Activated T-helper 2 cell treated with anti-CD3 and anti-CD28 coated beads, Interferon-gamma antibody, Interleukin-2, Interleukin-4, amounts not matched to agents 10 μg/mL and 5 μg/mL and 100 μg/mL, durations not matched to agents 14 hours and 24 hours and 36 hours (primary cell): ENCODE measurements at regions of chr16 and their contacts with region 1.

Region 1: DNA sequence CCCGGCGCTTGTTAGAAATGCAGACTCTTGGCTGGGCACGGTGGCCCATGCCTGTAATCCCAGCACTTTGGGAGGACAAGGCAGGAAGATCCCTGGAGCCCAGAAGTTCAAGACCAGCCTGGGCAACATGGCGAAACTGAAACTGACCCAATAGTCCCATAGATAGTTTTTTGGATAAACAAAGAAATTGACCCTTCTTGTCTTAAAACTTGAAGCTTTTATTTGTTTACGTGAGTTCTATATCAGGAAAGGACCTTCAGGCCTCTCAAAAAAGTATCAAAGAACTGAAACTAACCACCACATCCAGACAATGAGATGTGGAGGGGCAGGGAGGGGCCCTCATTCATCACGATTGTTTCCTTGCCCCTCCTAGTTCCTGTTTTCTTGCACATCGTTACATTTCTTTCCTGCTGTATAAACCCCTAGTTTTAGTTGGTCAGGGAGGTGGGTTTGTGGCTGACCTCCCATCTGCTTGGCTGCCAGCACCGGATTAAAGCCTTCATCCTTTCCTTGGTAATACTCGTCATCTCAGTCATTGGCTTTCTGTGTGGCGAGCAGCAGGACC is 29.9 kb upstream of the PRM1 start:
- DNase-seq: peak; percentile 65
- H3K4me3 Mint-ChIP-seq: peak overlapping the region; percentile 30
- H3K27ac Mint-ChIP-seq: peak overlapping the region; percentile 80
- H3K4me1 Mint-ChIP-seq: peaks cover 38% of the 10 kb centered on the region
- H3K27me3 Mint-ChIP-seq: no peaks in the 10 kb centered on the region

Region 2: DNA sequence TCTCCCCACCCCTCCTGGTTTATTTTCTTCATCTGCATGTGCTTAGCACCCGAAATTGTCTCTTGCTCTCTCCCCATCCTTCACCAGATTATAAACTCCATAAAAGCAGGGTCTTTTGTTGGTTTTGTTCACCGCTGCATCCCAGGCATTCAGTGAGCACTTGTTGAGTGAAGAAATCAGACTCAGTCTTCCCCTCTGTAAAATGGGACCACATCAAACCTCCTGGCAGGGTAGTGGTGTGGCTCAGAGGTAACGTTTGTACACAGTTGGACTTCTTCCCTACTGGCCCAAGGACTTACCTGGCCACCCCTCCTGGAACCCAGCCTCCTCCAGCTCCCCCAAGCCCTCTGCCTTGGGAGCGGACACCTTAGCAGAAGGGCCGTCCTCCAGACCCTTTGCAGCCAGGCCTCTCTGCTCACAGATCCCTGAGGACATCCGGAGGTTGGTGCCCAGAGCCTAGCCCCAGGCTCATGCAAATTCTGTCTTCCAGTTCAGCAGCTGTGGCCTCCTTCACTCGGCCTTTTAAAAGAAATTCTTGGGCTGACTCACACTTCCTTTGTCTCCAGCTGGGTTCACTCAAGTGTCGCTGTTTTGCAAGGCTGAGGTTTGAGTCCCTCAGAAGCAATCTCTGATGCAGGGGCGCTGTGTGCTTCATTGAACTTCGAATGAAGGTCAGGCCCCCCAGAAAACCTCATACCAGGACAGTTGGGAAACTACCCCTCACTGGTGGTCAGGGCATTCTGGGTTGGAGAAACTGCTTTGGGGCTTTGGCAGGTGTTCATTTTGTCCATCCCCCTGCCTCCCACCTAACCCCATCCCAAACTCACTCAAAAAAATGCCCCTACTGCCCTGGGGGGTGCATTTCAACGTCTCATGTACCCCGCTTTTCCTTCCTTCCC is 17.3 kb after region 1 on chr16:
- intact Hi-C with region 1: loop called (anchors 1 kb)
- DNase-seq: peak; percentile 45
- H3K4me3 Mint-ChIP-seq: peak overlapping the region; percentile 35
- H3K27ac Mint-ChIP-seq: peak overlapping the region; percentile 58
- H3K4me1 Mint-ChIP-seq: peaks cover 47% of the 10 kb centered on the region
- H3K27me3 Mint-ChIP-seq: no peaks in the 10 kb centered on the region

Region 3: GRCh38 chr16:11345040-11345862 is 34.2 kb after region 1 on chr16 and contains the start of gene RMI2:
- intact Hi-C with region 1: loop called (anchors 1 kb)
- DNase-seq: peak; percentile 98
- H3K4me3 Mint-ChIP-seq: peak within 1 kb of the TSS; percentile 96
- H3K27ac Mint-ChIP-seq: peak within 1 kb of the TSS; percentile 83
- H3K4me1 Mint-ChIP-seq: peaks cover 46% of the 10 kb centered on the region
- H3K27me3 Mint-ChIP-seq: no peaks in the 10 kb centered on the region
- total RNA-seq, gene RMI2: 65.2 and 67.4 TPM in 2 replicates

Region 4: GRCh38 chr16:11356573-11357331 is 45.7 kb after region 1 on chr16:
- intact Hi-C with region 1: loop called (anchors 1 kb)
- DNase-seq: peak; percentile 33
- H3K4me3 Mint-ChIP-seq: no peak overlapping the region
- H3K27ac Mint-ChIP-seq: no peak overlapping the region
- H3K4me1 Mint-ChIP-seq: peaks cover 68% of the 10 kb centered on the region
- H3K27me3 Mint-ChIP-seq: no peaks in the 10 kb centered on the region

Region 5: GRCh38 chr16:11361701-11362451 is 50.8 kb after region 1 on chr16:
- intact Hi-C with region 1: loop called (anchors 2 kb)
- DNase-seq: peak; percentile 33
- H3K4me3 Mint-ChIP-seq: peak overlapping the region; percentile 47
- H3K27ac Mint-ChIP-seq: peak overlapping the region; percentile 18
- H3K4me1 Mint-ChIP-seq: peaks cover 56% of the 10 kb centered on the region
- H3K27me3 Mint-ChIP-seq: no peaks in the 10 kb centered on the region

Region 6: DNA sequence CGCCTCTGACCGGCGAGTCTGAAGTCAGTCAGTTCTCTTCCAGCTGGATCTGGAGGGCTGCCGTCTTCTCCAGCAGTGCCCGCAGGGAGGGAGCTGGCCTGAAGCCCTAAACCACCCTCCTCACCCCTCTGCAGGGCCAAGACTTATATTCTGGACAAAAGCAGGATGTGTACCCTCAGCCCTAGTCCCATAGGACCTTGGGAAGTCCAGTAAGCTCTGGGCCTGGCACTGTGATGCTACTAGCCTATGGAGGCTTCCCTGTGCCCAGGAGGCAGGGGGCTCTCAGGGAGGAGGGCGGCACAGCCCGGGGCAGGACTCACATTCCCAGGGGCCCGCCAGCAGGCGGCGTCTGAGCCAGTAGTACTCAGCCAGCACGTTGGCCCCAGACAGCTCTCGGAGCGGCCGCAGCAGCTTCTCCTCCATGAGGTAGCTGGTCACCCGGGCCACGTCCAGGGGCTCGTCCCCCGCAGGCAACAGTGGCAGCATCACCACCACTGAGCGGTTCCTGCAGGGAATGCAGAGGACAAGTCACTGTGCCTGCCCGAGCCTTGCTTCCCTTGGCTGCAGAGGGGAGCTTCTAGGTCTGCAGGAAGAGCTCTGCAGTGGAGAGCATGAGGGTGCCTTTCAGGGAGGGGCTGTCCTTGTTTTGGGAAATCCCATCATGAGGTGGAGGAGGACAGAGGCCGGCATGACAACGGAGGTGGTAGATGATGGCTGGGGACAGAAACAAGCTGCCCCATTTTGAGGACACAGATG is 75.9 kb after region 1 on chr16:
- intact Hi-C with region 1: no loop called
- DNase-seq: no peak
- H3K4me3 Mint-ChIP-seq: no peak overlapping the region
- H3K27ac Mint-ChIP-seq: no peak overlapping the region
- H3K4me1 Mint-ChIP-seq: peaks cover 8% of the 10 kb centered on the region
- H3K27me3 Mint-ChIP-seq: no peaks in the 10 kb centered on the region